AG04449 (cell line): ENCODE measurements at regions of chr1 and their contacts with region 1.

Region 1: DNA sequence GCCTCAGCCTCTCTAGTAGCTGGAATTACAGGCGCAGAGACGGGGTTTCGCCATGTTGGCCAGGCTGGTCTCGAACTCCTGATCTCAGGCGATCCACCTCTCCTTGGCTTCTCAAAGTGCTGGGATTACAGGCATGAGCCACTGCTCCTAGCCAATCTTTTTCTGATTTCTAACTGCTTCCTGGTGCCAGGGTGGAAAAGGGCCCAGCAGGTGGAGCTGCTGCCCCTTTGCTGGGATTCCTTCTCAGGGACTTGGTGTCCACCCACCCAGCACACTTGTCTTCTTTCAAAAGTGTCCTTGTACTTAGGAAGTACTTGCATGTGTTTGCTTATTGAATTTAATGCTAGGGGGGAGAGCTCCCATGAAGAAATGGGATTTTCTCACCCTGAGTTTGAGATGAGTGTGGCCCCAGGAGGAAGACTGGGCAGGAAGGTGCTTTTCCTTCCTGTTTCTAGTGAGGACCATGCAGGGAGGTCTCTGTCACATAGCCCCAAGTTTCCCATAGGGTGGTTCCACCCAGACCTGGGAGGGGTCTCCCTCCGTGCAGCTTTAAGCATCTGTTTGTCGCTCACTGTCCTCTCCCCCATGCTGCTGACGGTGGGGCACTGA is 14.2 kb downstream of the UTP11 start:
- DNase-seq: no peak
- H3K4me3 ChIP-seq: no peak overlapping the region
- CTCF ChIP-seq: peak; percentile 82

Region 2: GRCh38 chr1:37931361-37932158 is 95.1 kb before region 1 on chr1:
- CTCF ChIA-PET with region 1: no interaction called
- POLR2A ChIA-PET with region 1: no interaction called
- DNase-seq: peak; percentile 47
- H3K4me3 ChIP-seq: peak overlapping the region; percentile 66
- CTCF ChIP-seq: no peak

Region 3: GRCh38 chr1:38012363-38013226 is 14.1 kb before region 1 on chr1 and contains the start of gene UTP11:
- CTCF ChIA-PET with region 1: interaction called, 69 read pairs
- POLR2A ChIA-PET with region 1: interaction called, 8 read pairs
- DNase-seq: peak; percentile 98
- H3K4me3 ChIP-seq: peak within 1 kb of the TSS; percentile 82
- CTCF ChIP-seq: no peak

Region 4: GRCh38 chr1:38037221-38037939 is 10.7 kb after region 1 on chr1:
- CTCF ChIA-PET with region 1: interaction called, 69 read pairs
- POLR2A ChIA-PET with region 1: interaction called, 9 read pairs
- DNase-seq: no peak
- H3K4me3 ChIP-seq: no peak overlapping the region
- CTCF ChIP-seq: peak; percentile 20

Region 5: GRCh38 chr1:38071312-38072256 is 44.9 kb after region 1 on chr1:
- CTCF ChIA-PET with region 1: interaction called, 15 read pairs
- POLR2A ChIA-PET with region 1: interaction called, 3 read pairs
- DNase-seq: no peak
- H3K4me3 ChIP-seq: no peak overlapping the region
- CTCF ChIP-seq: peak; percentile 57

Region 6: DNA sequence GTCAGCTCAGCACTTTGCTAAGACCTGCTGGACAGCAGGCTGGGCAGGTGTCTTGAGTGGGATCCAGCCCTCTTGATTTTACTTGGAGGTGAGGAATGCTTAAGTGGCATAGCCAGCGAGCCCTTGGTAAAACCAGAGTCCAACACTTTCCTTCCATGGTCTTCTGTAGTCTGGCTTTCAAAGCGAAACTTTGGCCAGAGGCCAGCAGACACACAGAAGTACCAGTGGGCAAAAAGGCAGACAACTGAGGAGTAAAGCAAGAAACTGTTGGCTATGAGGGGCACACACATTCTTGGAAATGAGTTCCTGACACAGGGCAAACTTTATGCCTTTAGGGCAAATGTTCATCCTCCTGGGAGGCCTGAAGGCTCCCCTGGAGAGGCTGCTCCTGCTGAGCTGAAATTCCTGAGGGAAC is 300.9 kb after region 1 on chr1:
- CTCF ChIA-PET with region 1: interaction called, 24 read pairs
- POLR2A ChIA-PET with region 1: no interaction called
- DNase-seq: no peak
- H3K4me3 ChIP-seq: no peak overlapping the region
- CTCF ChIP-seq: no peak

Region 7: DNA sequence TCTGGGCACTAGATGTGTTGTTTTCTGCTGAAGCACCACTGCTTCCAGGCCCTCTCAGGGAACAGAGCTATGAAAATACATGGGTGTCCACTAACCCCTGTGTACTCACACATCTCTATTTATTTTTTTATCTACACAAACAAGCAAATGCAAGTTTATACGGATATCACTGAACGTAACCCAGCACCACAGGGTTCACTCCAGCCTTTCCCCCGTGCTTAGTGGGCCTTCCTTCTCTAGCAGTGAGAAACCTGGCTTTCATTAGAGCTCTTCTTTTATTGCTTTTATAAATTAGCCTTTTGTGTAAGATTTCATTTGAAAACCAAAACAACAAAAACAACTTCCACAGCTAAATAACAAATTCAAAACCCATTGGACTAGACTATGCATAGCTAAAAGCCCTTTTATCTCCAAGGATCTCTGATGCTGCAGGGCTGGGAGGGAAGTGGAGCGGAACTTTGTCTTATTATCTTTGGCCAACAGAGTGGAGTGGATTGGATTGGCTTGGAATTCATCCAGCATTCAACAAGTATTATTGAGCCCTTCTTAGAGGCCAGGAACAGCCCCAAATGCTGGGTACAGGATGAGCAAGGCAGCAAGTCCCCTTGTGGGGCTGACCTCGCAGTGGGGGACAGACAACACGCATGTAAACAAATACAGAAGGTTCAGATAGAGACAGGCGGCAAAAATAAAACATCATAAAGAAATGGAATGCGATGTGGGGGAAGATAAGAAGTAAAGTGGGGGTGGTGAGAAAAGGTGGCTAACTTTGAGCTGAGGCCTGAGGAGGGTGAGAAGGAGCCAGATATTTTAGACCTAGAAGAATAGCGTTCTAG is 391.7 kb after region 1 on chr1:
- CTCF ChIA-PET with region 1: no interaction called
- POLR2A ChIA-PET with region 1: no interaction called
- DNase-seq: no peak
- H3K4me3 ChIP-seq: no peak overlapping the region
- CTCF ChIP-seq: no peak

Region 8: DNA sequence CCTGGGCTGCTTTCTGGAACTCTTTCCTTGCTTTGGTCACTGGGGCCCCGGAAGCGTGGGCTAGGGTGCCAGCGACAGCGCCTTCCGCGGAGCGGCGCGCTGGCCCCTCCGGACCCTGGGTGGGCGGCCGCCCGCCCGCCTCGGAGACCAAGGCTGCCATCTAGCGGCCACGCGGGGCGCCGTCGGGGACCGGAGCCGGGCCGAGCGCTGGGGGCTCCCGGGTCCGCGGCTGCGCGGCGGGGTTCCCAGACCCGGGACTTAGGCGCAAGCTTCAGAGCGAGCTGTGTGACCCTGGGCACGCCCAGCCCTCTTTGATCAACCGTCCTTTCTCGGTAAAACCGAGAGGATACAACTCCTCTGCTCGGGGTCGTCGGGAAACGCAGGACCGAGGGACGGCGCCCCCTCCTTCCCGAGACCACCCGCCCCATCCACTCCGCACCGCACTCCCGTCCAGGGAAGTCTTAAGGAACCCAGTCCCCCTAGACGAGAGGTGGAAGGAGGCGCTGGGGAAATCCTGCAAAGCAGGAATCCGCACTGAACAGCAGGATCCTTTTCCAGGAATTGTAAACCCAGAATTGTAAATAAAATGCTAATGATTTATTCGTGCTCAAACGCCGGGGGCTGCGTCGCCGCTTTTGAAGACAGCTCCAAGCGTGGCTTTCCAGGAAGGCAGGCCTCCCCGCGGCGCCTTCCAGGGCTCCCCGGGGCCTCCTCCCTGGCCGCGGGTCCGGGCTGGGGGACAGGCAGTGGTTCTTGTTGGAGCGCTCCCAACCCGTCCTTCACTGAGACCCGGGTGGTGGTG is 791.7 kb after region 1 on chr1:
- CTCF ChIA-PET with region 1: interaction called, 23 read pairs
- POLR2A ChIA-PET with region 1: no interaction called
- DNase-seq: no peak
- H3K4me3 ChIP-seq: peak overlapping the region; percentile 33
- CTCF ChIP-seq: peak; percentile 72

Region 9: DNA sequence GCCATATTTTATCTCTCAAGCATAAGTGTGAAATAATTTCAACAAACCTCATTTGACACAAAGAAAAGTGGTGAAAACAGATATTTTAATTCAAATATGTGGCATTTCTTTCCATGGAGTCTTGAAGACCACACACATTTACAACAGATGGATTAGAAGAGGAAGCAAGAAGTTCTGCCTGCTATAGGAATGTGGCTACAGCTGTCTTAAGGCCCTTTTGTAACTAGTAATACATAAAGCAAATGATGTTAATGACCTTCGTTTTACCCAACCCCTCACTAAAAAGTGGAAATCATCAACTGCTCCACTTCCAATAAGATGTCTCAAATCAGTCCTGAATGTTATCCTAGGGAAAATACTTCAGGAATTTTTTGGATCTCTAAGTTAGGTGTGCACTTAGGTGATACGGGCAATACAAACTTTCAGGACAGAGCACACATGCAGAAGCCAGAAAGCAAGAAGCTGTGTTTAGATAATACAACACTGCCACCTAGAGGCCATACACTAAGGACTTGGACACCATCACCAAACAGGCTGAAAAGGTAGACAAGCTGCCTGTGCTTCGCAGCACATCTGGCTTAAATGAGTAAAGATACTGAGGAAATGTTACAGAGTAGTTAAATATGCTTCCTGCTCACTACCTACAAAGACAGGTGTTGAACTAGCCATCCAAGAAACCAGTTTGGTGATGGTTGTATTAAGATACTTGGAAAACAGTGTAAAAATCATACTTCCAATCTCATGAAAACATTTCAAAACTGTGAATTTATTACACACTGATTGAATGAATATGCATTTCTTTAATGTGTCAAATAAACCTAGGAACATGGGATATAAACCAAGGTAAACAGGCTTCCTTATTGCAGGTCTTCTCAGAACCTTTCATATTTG is 808.5 kb after region 1 on chr1:
- CTCF ChIA-PET with region 1: interaction called, 200 read pairs
- POLR2A ChIA-PET with region 1: interaction called, 3 read pairs
- DNase-seq: peak; percentile 47
- H3K4me3 ChIP-seq: no peak overlapping the region
- CTCF ChIP-seq: peak; percentile 69